ENCODE measurements at regions of chr17 and their contacts with region 1.

Region 1: GRCh38 chr17:29148790-29149430 is 31.3 kb downstream of the MYO18A start:
- H3K4me3 Mint-ChIP-seq: peak overlapping the region; percentile 70
- H3K27ac Mint-ChIP-seq: peak overlapping the region; percentile 96
- H3K4me1 Mint-ChIP-seq: peaks cover 90% of the 10 kb centered on the region
- H3K27me3 Mint-ChIP-seq: no peaks in the 10 kb centered on the region

Region 2: DNA sequence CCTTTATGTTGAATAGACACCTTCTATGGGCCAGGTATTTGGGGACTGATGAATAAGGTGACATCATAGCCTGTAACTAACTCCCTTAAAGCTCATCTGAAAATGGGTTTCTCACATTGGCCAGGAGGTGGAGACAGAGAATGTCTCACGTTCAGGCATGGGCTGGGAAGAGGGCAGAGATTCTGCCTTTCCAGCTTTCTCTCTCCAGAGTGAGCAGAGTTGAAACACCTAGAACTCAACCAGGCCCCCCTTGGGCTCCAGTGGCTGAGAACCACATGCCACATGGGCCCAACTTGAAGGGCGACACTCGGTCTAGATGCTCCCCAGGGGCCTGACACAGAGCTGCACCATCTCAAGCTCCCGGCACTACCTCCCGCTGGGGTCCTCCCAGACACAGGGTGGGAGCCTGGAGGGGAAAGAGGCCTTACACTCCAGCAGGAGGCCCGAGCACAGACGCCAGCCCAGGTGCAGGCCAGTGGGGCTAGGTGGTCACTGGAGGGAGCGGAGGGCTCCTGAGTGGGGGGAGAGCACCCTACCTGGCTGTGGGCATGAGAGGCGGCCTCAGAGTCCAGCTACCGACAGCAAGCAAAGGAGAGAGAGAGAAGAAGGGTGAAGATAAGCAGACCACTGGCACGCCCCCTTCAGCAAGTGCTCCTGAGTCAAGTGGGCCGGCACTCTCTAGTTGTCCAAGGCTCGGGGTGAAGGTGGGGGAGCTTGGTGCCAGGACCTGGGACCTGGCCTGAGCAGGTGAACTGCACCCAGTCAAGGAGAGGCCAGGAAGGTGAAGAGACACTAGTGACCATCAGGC is 24.6 kb before region 1 on chr17:
- intact Hi-C with region 1: loop called (anchors 1 kb)
- H3K4me3 Mint-ChIP-seq: no peak overlapping the region
- H3K27ac Mint-ChIP-seq: peak overlapping the region; percentile 81
- H3K4me1 Mint-ChIP-seq: peaks cover 53% of the 10 kb centered on the region
- H3K27me3 Mint-ChIP-seq: no peaks in the 10 kb centered on the region

Region 3: DNA sequence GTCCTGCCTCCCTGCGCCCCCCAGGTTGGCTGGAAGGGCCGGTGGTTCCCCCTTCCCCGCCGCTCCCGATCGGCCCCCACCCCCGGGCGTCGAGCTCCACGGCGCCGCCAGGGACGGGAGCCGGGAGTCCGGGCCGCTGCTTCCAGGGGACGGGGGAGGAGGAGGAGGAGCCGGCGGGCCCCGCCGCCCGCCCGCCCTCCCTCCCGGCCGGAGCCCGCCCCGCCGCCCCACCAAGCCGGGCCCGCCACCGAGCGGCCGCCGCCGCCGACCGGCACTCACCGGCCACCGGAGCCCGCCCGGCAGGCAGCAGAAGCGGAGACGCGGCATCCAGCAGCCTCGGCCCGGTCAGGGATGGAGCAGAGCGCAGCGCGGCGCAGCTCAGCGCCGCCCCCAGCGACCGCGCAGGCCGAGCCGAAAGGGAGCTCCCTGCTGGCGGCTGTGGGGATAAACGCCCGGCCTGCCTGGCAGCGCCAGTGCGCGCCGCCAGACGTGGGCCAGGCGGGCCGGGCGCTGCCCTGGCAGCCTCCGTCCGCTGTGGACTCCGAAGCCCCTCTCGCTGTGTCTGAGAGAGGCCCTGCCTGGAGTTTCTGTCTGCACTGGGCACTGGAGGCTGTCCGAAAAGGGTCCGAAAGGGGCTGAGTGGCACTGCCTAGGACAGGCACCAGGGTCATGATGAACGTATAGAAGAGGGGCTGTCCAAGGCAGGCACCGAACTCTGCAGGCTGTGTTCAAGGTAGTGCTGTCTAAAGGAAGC is 31.3 kb after region 1 on chr17 and contains the start of gene MYO18A:
- intact Hi-C with region 1: loop called (anchors 1 kb)
- H3K4me3 Mint-ChIP-seq: peak within 1 kb of the TSS; percentile 78
- H3K27ac Mint-ChIP-seq: peak within 1 kb of the TSS; percentile 84
- H3K4me1 Mint-ChIP-seq: peaks cover 58% of the 10 kb centered on the region
- H3K27me3 Mint-ChIP-seq: peaks cover 11% of the 10 kb centered on the region

Region 4: GRCh38 chr17:29195465-29196081 is 46.7 kb after region 1 on chr17:
- intact Hi-C with region 1: no loop called
- H3K4me3 Mint-ChIP-seq: peak overlapping the region; percentile 52
- H3K27ac Mint-ChIP-seq: peak overlapping the region; percentile 87
- H3K4me1 Mint-ChIP-seq: peaks cover 78% of the 10 kb centered on the region
- H3K27me3 Mint-ChIP-seq: no peaks in the 10 kb centered on the region

Region 5: GRCh38 chr17:29219378-29220047 is 70.6 kb after region 1 on chr17:
- intact Hi-C with region 1: loop called (anchors 2 kb)
- H3K4me3 Mint-ChIP-seq: no peak overlapping the region
- H3K27ac Mint-ChIP-seq: no peak overlapping the region
- H3K4me1 Mint-ChIP-seq: peaks cover 40% of the 10 kb centered on the region
- H3K27me3 Mint-ChIP-seq: no peaks in the 10 kb centered on the region

Region 6: DNA sequence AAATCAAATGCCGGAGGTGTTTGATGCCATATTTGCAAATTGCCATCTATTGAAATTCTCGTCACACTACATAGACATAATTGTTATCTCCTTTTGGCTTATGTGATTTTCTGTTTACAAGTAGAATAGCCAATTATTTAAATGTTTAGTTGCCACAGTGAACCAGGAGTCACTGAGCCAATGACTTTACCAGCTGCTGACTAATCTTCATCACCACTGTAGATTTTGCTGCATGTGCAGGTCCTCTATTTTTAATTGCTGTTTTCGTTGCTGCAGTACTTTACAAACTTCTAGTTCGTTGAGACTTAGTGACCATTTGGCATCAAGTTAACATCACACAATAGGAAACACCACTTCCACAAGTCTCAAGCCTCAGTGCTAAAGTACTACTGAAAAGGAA is 395.2 kb after region 1 on chr17:
- intact Hi-C with region 1: no loop called
- H3K4me3 Mint-ChIP-seq: no peak overlapping the region
- H3K27ac Mint-ChIP-seq: no peak overlapping the region
- H3K4me1 Mint-ChIP-seq: no peaks in the 10 kb centered on the region
- H3K27me3 Mint-ChIP-seq: no peaks in the 10 kb centered on the region

Measured in dendritic cell treated with granulocyte-macrophage colony-stimulating factor and Interleukin-4, amounts not matched to agents 40 ng/mL and 50 ng/mL, for 4 days (primary cell).